ENCODE measurements at regions of chr3 and their contacts with region 1.

Region 1: GRCh38 chr3:177906126-177906511 is 630.1 kb upstream of the KCNMB2 start:
- DNase-seq: no peak
- H3K4me3 ChIP-seq: no peak overlapping the region
- CTCF ChIP-seq: no peak
- POLR2A ChIP-seq: no peak

Region 2: DNA sequence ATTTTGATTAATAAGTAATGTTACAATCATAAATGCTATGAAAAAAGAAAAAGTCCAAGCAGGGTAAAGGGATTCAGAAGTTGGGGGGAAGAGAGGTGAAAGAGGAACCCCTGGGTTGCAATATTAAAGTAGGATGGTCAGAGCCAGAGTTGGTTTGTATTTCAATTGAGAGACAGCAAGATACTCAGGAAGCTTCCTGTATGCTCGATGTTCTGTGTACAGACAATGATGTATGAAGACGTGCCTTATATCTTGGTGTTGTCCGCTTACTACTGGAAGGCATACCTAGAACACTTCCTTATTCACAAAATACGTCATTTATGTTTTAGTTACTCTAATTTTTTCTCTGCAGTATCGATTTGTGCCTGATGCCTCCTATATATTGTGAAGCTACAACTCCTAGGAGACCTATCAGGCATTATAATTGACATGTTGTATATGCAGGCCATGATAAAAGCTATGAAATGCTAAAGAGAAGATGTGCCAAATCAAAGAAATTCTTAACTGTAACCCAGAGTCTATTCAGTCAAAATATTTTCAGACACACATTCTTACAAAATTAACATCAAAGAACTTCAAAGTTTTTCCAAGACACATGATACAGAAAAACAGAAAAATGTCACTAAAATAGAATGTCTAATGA is 796.3 kb before region 1 on chr3:
- intact Hi-C with region 1: no loop called
- DNase-seq: no peak
- H3K4me3 ChIP-seq: no peak overlapping the region
- CTCF ChIP-seq: no peak
- POLR2A ChIP-seq: no peak

Region 3: GRCh38 chr3:177959188-177959587 is 53.1 kb after region 1 on chr3:
- intact Hi-C with region 1: loop called (anchors 10 kb)
- DNase-seq: no peak
- H3K4me3 ChIP-seq: no peak overlapping the region
- CTCF ChIP-seq: no peak
- POLR2A ChIP-seq: no peak

Region 4: DNA sequence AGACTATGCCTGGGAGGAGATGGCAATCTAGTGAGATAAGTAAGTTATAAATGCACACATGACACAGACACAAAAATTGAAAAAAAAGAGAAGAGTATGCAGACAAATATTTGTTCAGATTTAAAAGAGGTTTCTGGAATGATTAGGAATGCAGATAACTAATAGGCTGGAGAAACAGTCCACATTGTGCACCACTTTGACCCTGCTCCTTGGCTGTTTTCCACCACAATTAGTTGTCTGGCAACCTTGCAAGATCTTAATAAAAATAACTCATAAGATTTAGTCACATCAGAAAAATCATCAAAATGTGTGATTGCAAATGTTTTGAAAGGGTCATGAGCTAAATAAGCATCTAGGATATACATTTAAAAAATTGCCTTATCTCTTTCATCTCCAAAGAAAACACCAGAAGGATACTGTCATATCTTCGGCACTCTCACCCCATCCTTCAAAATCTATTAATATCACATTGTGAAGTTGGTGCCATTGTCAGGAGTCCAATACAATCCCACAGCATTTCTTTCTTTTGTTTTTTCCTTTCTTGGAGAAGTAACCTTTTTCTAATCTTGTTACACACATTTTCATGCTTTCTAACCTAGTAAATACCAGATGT is 476.4 kb after region 1 on chr3:
- intact Hi-C with region 1: no loop called
- DNase-seq: no peak
- H3K4me3 ChIP-seq: no peak overlapping the region
- CTCF ChIP-seq: no peak
- POLR2A ChIP-seq: no peak

Measured in lower leg skin (tissue), 4 donors.